Heart left ventricle (tissue), 16 donors: ENCODE measurements at regions of chr9 and their contacts with region 1.

Region 1: GRCh38 chr9:34252670-34253459 is 74.0 kb downstream of the UBAP1 start:
- DNase-seq: peak in 4 of 5 donors; percentile 63 to 73 (median 71)
- ATAC-seq: peak; percentile 25 to 61 (median 43)
- H3K4me3 ChIP-seq: peak overlapping the region in 1 of 12 donors; percentile 4
- H3K27ac ChIP-seq: peak overlapping the region; percentile 57 to 86 (median 79)
- H3K4me1 ChIP-seq: peaks cover 0 to 76% (median 49%) of the 10 kb centered on the region in 12 donors
- H3K27me3 ChIP-seq: no peaks in the 10 kb centered on the region
- CTCF ChIP-seq: peak; percentile 52 to 98 (median 92)
- POLR2A ChIP-seq: no peak

Region 2: GRCh38 chr9:32672461-32672860 is 1580.4 kb before region 1 on chr9:
- intact Hi-C with region 1: no loop called
- DNase-seq: no peak
- ATAC-seq: no peak
- H3K4me3 ChIP-seq: no peak overlapping the region
- H3K27ac ChIP-seq: no peak overlapping the region
- H3K4me1 ChIP-seq: no peaks in the 10 kb centered on the region
- H3K27me3 ChIP-seq: no peaks in the 10 kb centered on the region
- CTCF ChIP-seq: no peak
- POLR2A ChIP-seq: no peak

Region 3: DNA sequence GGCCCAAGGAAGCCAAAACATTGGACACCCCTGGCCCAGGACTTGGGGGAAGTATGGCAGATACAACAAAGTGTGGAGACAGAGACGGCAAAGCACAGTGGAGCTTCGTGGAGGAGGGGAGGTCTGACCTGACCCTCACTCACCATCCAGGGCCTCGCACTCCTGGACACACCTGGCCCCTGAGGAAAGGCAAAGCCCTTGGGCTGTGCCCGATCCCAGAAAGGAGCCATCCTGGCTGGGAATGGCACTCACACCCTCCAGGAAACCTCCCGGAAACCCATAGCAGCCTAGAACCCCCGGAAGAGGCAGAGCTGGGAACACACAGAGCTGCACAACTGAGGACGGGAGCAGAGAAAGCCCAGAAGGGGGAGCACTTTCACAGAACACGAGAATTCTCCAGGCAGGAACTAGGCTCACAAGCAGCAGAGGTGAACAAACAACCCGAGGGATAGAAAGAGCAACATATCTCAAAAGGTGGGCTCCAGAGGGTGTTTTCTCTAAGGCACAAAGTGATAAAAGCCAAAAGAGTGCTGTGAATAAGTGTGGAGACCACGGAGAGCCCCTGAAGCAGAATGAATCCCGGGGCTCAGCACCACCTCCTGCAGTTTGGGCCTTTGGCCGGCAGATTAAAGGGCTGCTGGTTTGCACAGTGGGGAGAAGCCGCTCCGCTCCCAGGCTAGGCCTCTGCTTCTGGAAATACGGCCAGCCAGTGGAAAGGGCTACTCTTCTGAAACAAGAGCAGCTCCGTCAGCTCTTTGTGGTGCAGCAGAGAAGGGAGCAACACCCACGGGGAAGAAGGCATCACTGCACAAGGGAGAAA is 327.7 kb before region 1 on chr9:
- intact Hi-C with region 1: loop called in 5 of 10 experiments (anchors 5 to 10 kb)
- DNase-seq: peak in 4 of 5 donors; percentile 43 to 56 (median 48)
- ATAC-seq: peak; percentile 30 to 71 (median 62)
- H3K4me3 ChIP-seq: no peak overlapping the region
- H3K27ac ChIP-seq: peak overlapping the region in 10 of 12 donors; percentile 8 to 50 (median 40)
- H3K4me1 ChIP-seq: peaks cover 0 to 42% (median 13%) of the 10 kb centered on the region in 12 donors
- H3K27me3 ChIP-seq: no peaks in the 10 kb centered on the region
- CTCF ChIP-seq: peak; percentile 40 to 74 (median 62)
- POLR2A ChIP-seq: no peak

Region 4: GRCh38 chr9:34048923-34049697 is 203.8 kb before region 1 on chr9:
- intact Hi-C with region 1: loop called in 1 of 10 experiments (anchors 10 kb)
- DNase-seq: peak; percentile 97 to 99 (median 99)
- ATAC-seq: peak; percentile 95 to 97 (median 96)
- H3K4me3 ChIP-seq: peak overlapping the region; percentile 71 to 100 (median 84)
- H3K27ac ChIP-seq: peak overlapping the region; percentile 77 to 99 (median 92)
- H3K4me1 ChIP-seq: peaks cover 3 to 32% (median 25%) of the 10 kb centered on the region in 12 donors
- H3K27me3 ChIP-seq: no peaks in the 10 kb centered on the region
- CTCF ChIP-seq: peak in 3 of 12 donors; percentile 20 to 28 (median 26)
- POLR2A ChIP-seq: no peak

Region 5: GRCh38 chr9:34098307-34098706 is 154.6 kb before region 1 on chr9:
- intact Hi-C with region 1: loop called in 2 of 10 experiments (anchors 5 to 10 kb)
- DNase-seq: no peak
- ATAC-seq: no peak
- H3K4me3 ChIP-seq: no peak overlapping the region
- H3K27ac ChIP-seq: no peak overlapping the region
- H3K4me1 ChIP-seq: peaks cover 0 to 12% (median 0%) of the 10 kb centered on the region in 12 donors
- H3K27me3 ChIP-seq: no peaks in the 10 kb centered on the region
- CTCF ChIP-seq: no peak
- POLR2A ChIP-seq: no peak

Region 6: DNA sequence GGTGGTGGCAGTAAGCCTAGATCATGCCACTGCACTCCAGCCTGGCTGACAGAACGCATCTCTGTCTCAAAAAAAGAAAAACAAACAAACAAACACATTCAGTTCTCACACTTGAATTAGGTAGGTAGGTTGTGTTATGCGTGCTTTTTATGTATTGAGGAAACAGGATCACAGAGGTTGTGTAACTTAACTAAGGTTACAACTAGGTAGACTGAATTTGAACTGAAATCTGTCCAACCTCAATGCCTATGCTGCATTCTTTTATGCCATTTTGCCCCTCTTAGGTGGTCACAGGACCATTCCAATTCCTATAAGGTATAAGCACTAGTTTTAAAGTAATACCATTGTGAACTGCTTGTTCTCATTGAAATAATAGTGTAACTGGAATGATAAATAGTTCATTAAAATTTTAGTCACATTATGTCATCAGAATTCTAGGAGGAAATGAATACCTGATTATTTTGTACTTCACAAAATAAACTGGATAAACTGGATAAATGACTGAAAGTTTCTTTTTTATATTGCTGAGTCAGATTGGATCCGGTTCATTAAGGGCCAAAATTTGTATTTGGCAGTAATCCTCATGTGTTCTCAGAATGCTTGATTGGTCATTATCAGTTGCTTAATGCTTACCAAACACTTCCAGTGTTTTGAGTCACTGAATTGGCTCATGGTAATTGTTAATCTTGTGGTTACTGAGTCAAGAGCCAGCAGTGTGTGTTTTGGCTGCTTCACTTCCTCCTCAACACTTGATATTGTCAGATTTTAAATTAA is 66.9 kb before region 1 on chr9:
- intact Hi-C with region 1: loop called in 2 of 10 experiments (anchors 5 to 10 kb)
- DNase-seq: peak in 4 of 5 donors; percentile 40 to 52 (median 44)
- ATAC-seq: peak; percentile 84 to 97 (median 95)
- H3K4me3 ChIP-seq: no peak overlapping the region
- H3K27ac ChIP-seq: peak overlapping the region in 11 of 12 donors; percentile 0 to 72 (median 55)
- H3K4me1 ChIP-seq: peaks cover 6 to 56% (median 44%) of the 10 kb centered on the region in 12 donors
- H3K27me3 ChIP-seq: no peaks in the 10 kb centered on the region
- CTCF ChIP-seq: no peak
- POLR2A ChIP-seq: no peak

Region 7: GRCh38 chr9:34197756-34198711 is 54.8 kb before region 1 on chr9:
- intact Hi-C with region 1: no loop called
- DNase-seq: peak in 1 of 5 donors; percentile 28
- ATAC-seq: peak in 3 of 4 donors; percentile 25 to 82 (median 53)
- H3K4me3 ChIP-seq: no peak overlapping the region
- H3K27ac ChIP-seq: no peak overlapping the region
- H3K4me1 ChIP-seq: peaks cover 0 to 45% (median 22%) of the 10 kb centered on the region in 12 donors
- H3K27me3 ChIP-seq: no peaks in the 10 kb centered on the region
- CTCF ChIP-seq: no peak
- POLR2A ChIP-seq: no peak